Common myeloid progenitor, CD34-positive (primary cell): ENCODE measurements at regions of chr5 and their contacts with region 1.

Region 1: GRCh38 chr5:135398853-135399523 is at the start of gene MACROH2A1:
- DNase-seq: peak; percentile 78 to 86 (median 79)
- H3K4me3 ChIP-seq: peak within 1 kb of the TSS; percentile 66 to 93 (median 86)
- H3K27ac ChIP-seq: peak within 1 kb of the TSS; percentile 95 to 97
- H3K4me1 ChIP-seq: peaks cover 28 to 74% (median 61%) of the 10 kb centered on the region in 4 experiments
- H3K27me3 ChIP-seq: no peaks in the 10 kb centered on the region

Region 2: GRCh38 chr5:135386886-135387628 is 11.9 kb before region 1 on chr5:
- CTCF ChIA-PET with region 1: interaction called, 52 read pairs
- POLR2A ChIA-PET with region 1: interaction called, 3 read pairs
- DNase-seq: peak in 2 of 3 donors; percentile 56 to 67
- H3K4me3 ChIP-seq: peak overlapping the region in 1 of 7 experiments; percentile 39
- H3K27ac ChIP-seq: peak overlapping the region; percentile 20 to 72
- H3K4me1 ChIP-seq: peaks cover 18 to 100% (median 82%) of the 10 kb centered on the region in 4 experiments
- H3K27me3 ChIP-seq: no peaks in the 10 kb centered on the region

Region 3: GRCh38 chr5:135410348-135410747 is 11.4 kb after region 1 on chr5:
- CTCF ChIA-PET with region 1: interaction called, 14 read pairs
- POLR2A ChIA-PET with region 1: interaction called, 3 read pairs
- DNase-seq: no peak
- H3K4me3 ChIP-seq: no peak overlapping the region
- H3K27ac ChIP-seq: no peak overlapping the region
- H3K4me1 ChIP-seq: peaks cover 0 to 16% (median 3%) of the 10 kb centered on the region in 4 experiments
- H3K27me3 ChIP-seq: no peaks in the 10 kb centered on the region